ENCODE measurements at regions of chr18 and their contacts with region 1.

Region 1: GRCh38 chr18:7177116-7177744 is 53.7 kb upstream of the LRRC30 start:
- DNase-seq: peak; percentile 47
- H3K4me3 ChIP-seq: no peak overlapping the region
- H3K27ac ChIP-seq: no peak overlapping the region
- H3K4me1 ChIP-seq: no peaks in the 10 kb centered on the region
- H3K27me3 ChIP-seq: no peaks in the 10 kb centered on the region
- CTCF ChIP-seq: peak; percentile 14 to 72 (median 55)
- POLR2A ChIP-seq: no peak

Region 2: GRCh38 chr18:7038330-7038851 is 138.8 kb before region 1 on chr18:
- intact Hi-C with region 1: loop called (anchors 5 kb)
- DNase-seq: peak; percentile 88
- H3K4me3 ChIP-seq: peak overlapping the region in 1 of 2 donors; percentile 13
- H3K27ac ChIP-seq: peak overlapping the region; percentile 43 to 45
- H3K4me1 ChIP-seq: peaks cover 6% of the 10 kb centered on the region
- H3K27me3 ChIP-seq: no peaks in the 10 kb centered on the region
- CTCF ChIP-seq: peak; percentile 46 to 83 (median 61)
- POLR2A ChIP-seq: no peak